CD4-positive, alpha-beta T cell (primary cell): ENCODE measurements at regions of chr3 and their contacts with region 1.

Region 1: GRCh38 chr3:11452885-11453847 is 181.0 kb downstream of the ATG7 start:
- DNase-seq: no peak
- ATAC-seq: no peak
- H3K4me3 ChIP-seq: no peak overlapping the region
- H3K4me3 Mint-ChIP-seq: no peak overlapping the region
- H3K27ac ChIP-seq: no peak overlapping the region
- H3K27ac Mint-ChIP-seq: no peak overlapping the region
- H3K4me1 ChIP-seq: no peaks in the 10 kb centered on the region
- H3K4me1 Mint-ChIP-seq: no peaks in the 10 kb centered on the region
- H3K27me3 ChIP-seq: no peaks in the 10 kb centered on the region
- H3K27me3 Mint-ChIP-seq: no peaks in the 10 kb centered on the region
- CTCF ChIP-seq: no peak

Region 2: DNA sequence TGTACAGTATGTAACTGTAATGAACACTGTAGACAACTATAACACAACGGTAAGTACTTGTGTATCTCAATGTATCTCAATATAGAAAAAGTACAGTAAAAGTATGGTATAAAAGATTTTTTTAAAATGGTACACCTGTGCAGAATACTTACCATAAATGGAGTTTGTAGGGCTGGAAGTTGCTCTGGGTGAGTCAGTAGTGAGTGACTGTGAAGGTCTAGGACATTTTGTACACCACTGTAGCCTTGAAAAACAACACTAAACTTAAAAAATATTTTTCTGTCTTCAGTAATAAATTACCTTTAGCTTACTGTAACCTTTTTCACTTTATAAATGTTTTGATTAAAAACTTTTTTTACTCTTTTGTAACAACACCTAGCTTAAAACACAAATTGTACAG is 38.1 kb before region 1 on chr3:
- CTCF ChIA-PET with region 1: no interaction called
- POLR2A ChIA-PET with region 1: no interaction called
- intact Hi-C with region 1: no loop called
- DNase-seq: no peak
- ATAC-seq: no peak
- H3K4me3 ChIP-seq: no peak overlapping the region
- H3K4me3 Mint-ChIP-seq: no peak overlapping the region
- H3K27ac ChIP-seq: no peak overlapping the region
- H3K27ac Mint-ChIP-seq: no peak overlapping the region
- H3K4me1 ChIP-seq: no peaks in the 10 kb centered on the region
- H3K4me1 Mint-ChIP-seq: peaks cover 5% of the 10 kb centered on the region
- H3K27me3 ChIP-seq: no peaks in the 10 kb centered on the region
- H3K27me3 Mint-ChIP-seq: no peaks in the 10 kb centered on the region
- CTCF ChIP-seq: no peak

Region 3: GRCh38 chr3:11514191-11514821 is 61.1 kb after region 1 on chr3:
- CTCF ChIA-PET with region 1: no interaction called
- POLR2A ChIA-PET with region 1: no interaction called
- intact Hi-C with region 1: loop called in 1 of 2 experiments (anchors 10 kb)
- DNase-seq: no peak
- ATAC-seq: no peak
- H3K4me3 ChIP-seq: no peak overlapping the region
- H3K4me3 Mint-ChIP-seq: no peak overlapping the region
- H3K27ac ChIP-seq: no peak overlapping the region
- H3K27ac Mint-ChIP-seq: no peak overlapping the region
- H3K4me1 ChIP-seq: no peaks in the 10 kb centered on the region
- H3K4me1 Mint-ChIP-seq: no peaks in the 10 kb centered on the region
- H3K27me3 ChIP-seq: no peaks in the 10 kb centered on the region
- H3K27me3 Mint-ChIP-seq: no peaks in the 10 kb centered on the region
- CTCF ChIP-seq: no peak

Region 4: GRCh38 chr3:11770477-11771391 is 317.6 kb after region 1 on chr3:
- CTCF ChIA-PET with region 1: no interaction called
- POLR2A ChIA-PET with region 1: no interaction called
- intact Hi-C with region 1: no loop called
- DNase-seq: peak; percentile 67 to 95 (median 72)
- ATAC-seq: peak; percentile 99
- H3K4me3 ChIP-seq: peak overlapping the region; percentile 24
- H3K4me3 Mint-ChIP-seq: peak overlapping the region; percentile 2
- H3K27ac ChIP-seq: peak overlapping the region; percentile 52 to 53
- H3K27ac Mint-ChIP-seq: peak overlapping the region; percentile 60
- H3K4me1 ChIP-seq: peaks cover 18% of the 10 kb centered on the region
- H3K4me1 Mint-ChIP-seq: peaks cover 19% of the 10 kb centered on the region
- H3K27me3 ChIP-seq: no peaks in the 10 kb centered on the region
- H3K27me3 Mint-ChIP-seq: no peaks in the 10 kb centered on the region
- CTCF ChIP-seq: no peak